ENCODE measurements at regions of chr1 and their contacts with region 1.

Region 1: DNA sequence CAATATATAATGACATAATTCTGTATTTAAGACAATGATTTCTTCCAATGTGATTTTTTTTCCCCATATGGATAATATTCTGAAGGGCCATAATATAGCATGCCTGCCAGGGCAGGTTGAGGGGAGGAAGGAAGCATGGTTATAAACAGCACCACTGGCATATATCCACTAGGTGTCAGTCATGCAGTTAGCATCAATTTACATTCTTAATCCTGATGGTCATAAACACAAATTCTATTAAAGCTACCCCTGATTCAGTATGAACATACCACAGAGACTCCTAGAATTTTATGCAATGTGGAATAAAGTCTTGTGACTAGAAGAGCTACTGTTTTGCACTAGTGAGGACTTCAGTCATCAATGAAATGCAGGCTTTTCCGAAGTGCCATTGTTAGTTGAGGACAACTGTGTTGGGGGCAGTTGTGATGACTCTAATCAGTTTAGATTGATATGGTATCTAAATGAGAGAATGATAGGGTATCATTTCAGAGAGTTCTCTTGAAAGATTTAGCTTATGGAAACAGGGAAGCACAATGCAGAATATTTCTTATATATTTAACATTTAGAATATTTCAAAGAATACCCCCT is 342.7 kb upstream of the NR5A2 start:
- DNase-seq: peak in 1 of 2 experiments; percentile 53
- H3K4me3 ChIP-seq: no peak overlapping the region
- H3K4me3 Mint-ChIP-seq: no peak overlapping the region
- H3K27ac Mint-ChIP-seq: no peak overlapping the region
- H3K4me1 ChIP-seq: peaks cover 15% of the 10 kb centered on the region
- H3K4me1 Mint-ChIP-seq: peaks cover 7% of the 10 kb centered on the region
- H3K27me3 ChIP-seq: no peaks in the 10 kb centered on the region
- H3K27me3 Mint-ChIP-seq: no peaks in the 10 kb centered on the region
- CTCF ChIP-seq: peak; percentile 74 to 76

Region 2: GRCh38 chr1:199522936-199523335 is 161.8 kb before region 1 on chr1:
- CTCF ChIA-PET with region 1: no interaction called
- POLR2A ChIA-PET with region 1: no interaction called
- intact Hi-C with region 1: no loop called
- DNase-seq: no peak
- H3K4me3 ChIP-seq: no peak overlapping the region
- H3K4me3 Mint-ChIP-seq: no peak overlapping the region
- H3K27ac Mint-ChIP-seq: no peak overlapping the region
- H3K4me1 ChIP-seq: no peaks in the 10 kb centered on the region
- H3K4me1 Mint-ChIP-seq: no peaks in the 10 kb centered on the region
- H3K27me3 ChIP-seq: no peaks in the 10 kb centered on the region
- H3K27me3 Mint-ChIP-seq: no peaks in the 10 kb centered on the region
- CTCF ChIP-seq: no peak

Region 3: DNA sequence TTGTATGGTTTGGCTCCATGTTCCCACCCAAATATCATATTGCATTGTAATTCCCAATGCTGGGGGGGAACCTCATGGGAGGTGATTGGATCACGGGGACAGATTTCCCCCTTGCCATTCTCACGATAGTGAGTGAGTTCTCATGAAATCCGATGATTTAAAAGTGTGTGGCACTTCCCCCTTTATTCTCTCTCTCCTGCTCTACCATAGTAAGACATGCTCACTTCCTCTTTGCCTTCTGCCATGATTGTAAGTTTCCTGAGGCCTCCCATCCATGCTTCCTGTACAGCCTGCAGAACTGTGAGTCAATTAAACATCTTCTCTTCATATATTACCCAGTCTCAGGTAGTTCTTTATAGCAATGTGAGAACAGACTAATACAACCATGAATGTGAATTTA is 131.2 kb after region 1 on chr1:
- CTCF ChIA-PET with region 1: no interaction called
- POLR2A ChIA-PET with region 1: no interaction called
- intact Hi-C with region 1: no loop called
- DNase-seq: no peak
- H3K4me3 ChIP-seq: no peak overlapping the region
- H3K4me3 Mint-ChIP-seq: no peak overlapping the region
- H3K27ac Mint-ChIP-seq: no peak overlapping the region
- H3K4me1 ChIP-seq: no peaks in the 10 kb centered on the region
- H3K4me1 Mint-ChIP-seq: no peaks in the 10 kb centered on the region
- H3K27me3 ChIP-seq: no peaks in the 10 kb centered on the region
- H3K27me3 Mint-ChIP-seq: peaks cover 6% of the 10 kb centered on the region
- CTCF ChIP-seq: no peak

Region 4: GRCh38 chr1:199954699-199955098 is 269.9 kb after region 1 on chr1:
- CTCF ChIA-PET with region 1: no interaction called
- POLR2A ChIA-PET with region 1: no interaction called
- intact Hi-C with region 1: loop called (anchors 10 kb)
- DNase-seq: peak; percentile 53 to 58
- H3K4me3 ChIP-seq: no peak overlapping the region
- H3K4me3 Mint-ChIP-seq: no peak overlapping the region
- H3K27ac Mint-ChIP-seq: no peak overlapping the region
- H3K4me1 ChIP-seq: 0 out of 2 replicates have a peak, but pooled peaks cover 6% of the 10 kb centered on the region
- H3K4me1 Mint-ChIP-seq: peaks cover 7% of the 10 kb centered on the region
- H3K27me3 ChIP-seq: no peaks in the 10 kb centered on the region
- H3K27me3 Mint-ChIP-seq: no peaks in the 10 kb centered on the region
- CTCF ChIP-seq: peak; percentile 59 to 82

Region 5: DNA sequence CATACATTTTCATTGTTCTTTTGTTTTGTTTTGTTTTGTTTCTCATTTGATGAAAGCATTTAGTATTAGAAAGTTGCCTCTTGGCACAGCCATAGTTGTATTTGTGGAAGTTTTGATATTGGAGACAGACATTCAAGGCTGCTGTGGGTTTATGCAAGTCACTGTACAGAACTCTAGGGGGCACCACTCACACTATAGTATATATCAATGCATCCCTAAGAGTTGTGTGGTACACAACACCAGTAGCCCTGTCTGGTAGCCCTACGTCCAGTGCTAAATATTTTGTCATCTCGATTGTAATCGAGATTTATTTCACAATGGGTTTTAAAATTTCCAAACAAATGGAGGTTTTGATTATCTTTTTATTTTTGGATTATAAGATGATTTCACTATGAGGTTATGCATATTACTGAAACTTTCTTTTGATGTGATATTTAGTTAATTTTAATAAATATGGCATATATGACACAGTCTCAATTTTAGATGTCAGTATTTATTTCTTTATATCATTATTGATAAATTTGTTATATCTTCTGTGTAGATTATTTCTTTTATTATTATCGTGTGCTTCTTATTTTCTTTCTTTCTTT is 455.0 kb after region 1 on chr1:
- CTCF ChIA-PET with region 1: no interaction called
- POLR2A ChIA-PET with region 1: no interaction called
- intact Hi-C with region 1: loop called (anchors 10 kb)
- DNase-seq: peak in 1 of 2 experiments; percentile 42
- H3K4me3 ChIP-seq: no peak overlapping the region
- H3K4me3 Mint-ChIP-seq: no peak overlapping the region
- H3K27ac Mint-ChIP-seq: no peak overlapping the region
- H3K4me1 ChIP-seq: no peaks in the 10 kb centered on the region
- H3K4me1 Mint-ChIP-seq: no peaks in the 10 kb centered on the region
- H3K27me3 ChIP-seq: no peaks in the 10 kb centered on the region
- H3K27me3 Mint-ChIP-seq: no peaks in the 10 kb centered on the region
- CTCF ChIP-seq: peak; percentile 41 to 54

Region 6: GRCh38 chr1:200488375-200489165 is 803.8 kb after region 1 on chr1:
- CTCF ChIA-PET with region 1: no interaction called
- POLR2A ChIA-PET with region 1: no interaction called
- intact Hi-C with region 1: loop called (anchors 1 kb)
- DNase-seq: peak; percentile 72 to 82
- H3K4me3 ChIP-seq: no peak overlapping the region
- H3K4me3 Mint-ChIP-seq: no peak overlapping the region
- H3K27ac Mint-ChIP-seq: peak overlapping the region; percentile 67
- H3K4me1 ChIP-seq: no peaks in the 10 kb centered on the region
- H3K4me1 Mint-ChIP-seq: peaks cover 18% of the 10 kb centered on the region
- H3K27me3 ChIP-seq: no peaks in the 10 kb centered on the region
- H3K27me3 Mint-ChIP-seq: no peaks in the 10 kb centered on the region
- CTCF ChIP-seq: peak; percentile 76 to 83

Measured in Caco-2 (cell line).